ENCODE measurements at regions of chr19 and their contacts with region 1.

Region 1: GRCh38 chr19:50368649-50369570 is 3.5 kb upstream of the NAPSA start:
- DNase-seq: peak; percentile 82
- ATAC-seq: peak; percentile 97

Region 2: DNA sequence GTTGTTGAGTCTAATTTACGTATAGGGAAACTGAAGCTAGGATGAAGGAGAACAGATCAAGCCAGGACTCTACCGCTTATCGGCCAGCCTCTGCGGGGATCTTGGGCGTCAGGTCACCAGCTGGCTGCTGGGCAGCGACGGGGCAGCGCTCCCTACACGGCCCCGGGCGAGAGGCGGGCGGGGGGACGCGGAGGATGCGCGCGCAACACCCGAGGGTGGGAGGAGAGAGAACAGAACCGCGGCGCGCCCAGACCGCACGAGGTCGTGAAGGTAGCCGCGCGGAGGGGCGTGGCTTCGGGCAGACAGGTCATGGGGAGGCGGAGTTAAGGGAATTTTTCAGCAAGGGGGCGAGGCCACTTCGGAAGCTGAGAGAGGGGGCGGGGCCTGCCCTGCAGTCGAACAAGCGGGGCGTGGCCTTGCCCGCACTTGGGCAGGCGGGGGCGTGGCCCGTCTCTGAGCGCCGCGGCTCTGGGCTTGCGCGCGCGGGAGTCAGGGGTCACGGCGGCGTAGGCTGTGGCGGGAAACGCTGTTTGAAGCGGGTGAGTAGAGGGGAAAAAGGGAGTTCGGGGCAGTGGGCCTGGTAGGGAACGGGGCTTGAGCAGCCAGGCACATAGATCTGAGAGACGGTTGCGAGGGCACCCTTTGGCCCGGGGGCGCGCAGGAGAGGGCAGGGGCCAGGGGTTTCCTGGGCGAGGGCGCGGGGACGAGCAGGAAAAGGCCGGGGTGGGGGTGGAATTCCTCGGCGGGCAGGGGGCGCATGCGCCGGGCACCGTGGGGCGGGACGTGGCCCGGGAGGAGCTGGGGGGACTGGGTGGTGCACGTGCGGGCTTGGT is 15.2 kb after region 1 on chr19 and contains the start of gene POLD1:
- intact Hi-C with region 1: no loop called
- DNase-seq: peak; percentile 98
- ATAC-seq: peak; percentile 95 to 97
- total RNA-seq, gene POLD1: 12.0 to 13.4 TPM

Region 3: GRCh38 chr19:50414864-50415660 is 46.2 kb after region 1 on chr19:
- intact Hi-C with region 1: loop called (anchors 2 to 5 kb)
- DNase-seq: peak; percentile 82
- ATAC-seq: peak; percentile 80

Region 4: DNA sequence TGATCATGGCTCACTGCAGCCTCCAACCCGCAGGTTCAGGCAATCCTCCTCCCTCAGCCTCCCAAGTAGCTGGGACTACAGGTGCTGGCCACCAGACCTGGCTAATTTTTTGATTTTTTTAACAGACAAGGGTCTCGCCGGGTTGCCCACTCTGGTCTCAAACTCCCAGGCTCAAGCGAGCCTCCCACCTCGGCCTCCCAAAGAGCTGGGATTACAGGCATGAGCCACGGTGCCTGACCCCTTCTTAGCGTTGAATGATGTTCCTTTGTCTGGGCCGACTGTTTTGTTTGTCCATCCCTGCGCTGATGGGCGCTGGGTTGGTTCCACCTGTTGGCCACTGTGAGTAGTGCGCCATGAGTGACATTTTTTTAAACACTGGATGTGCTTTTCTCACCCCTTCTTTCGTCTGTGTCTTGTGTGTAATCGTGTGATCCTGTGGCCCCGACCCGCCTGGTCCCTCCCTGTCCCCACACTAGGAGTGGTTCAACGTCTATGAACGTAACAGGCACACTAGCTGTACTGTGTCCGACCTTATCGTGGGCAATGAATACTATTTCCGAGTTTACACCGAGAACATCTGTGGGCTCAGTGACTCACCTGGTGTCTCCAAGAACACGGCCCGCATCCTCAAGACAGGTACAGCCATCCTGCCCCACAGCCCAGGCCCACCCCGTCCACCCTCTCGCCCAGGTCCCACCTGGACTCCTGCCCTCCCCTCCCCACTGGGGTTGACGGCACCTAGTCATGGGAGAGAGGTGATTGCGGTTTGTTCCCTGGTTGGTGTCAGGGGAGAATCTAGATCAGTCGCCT is 92.4 kb after region 1 on chr19:
- intact Hi-C with region 1: loop called (anchors 2 to 5 kb)
- DNase-seq: peak; percentile 57
- ATAC-seq: peak; percentile 78 to 79

Region 5: DNA sequence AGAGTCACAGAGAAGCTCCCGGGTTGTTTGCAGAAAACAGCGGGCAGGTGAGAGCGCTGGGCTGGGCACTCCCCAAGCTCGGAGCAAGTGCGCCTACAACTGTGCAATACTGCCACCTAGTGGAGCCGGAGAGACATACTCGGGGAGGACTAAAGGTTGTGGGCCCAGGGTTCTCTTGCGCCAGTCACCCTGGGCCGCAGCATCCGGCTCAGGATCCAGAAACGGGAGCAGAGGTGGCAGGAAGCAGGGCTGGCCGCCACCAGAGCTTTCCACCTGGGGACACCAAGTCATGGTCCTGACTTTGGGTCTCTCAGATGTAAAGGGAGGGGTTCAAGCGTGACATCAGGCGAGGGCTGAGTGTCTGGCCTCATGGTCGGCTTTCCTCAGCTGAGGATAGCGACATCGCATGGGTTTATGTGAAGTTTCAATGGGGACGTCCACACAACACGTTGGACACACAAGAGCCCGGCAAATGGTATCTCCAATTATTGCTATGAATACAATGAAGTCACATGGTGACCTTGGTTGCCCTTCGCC is 553.5 kb after region 1 on chr19:
- intact Hi-C with region 1: loop called in 1 of 2 experiments (anchors 10 kb)
- DNase-seq: peak; percentile 71
- ATAC-seq: peak; percentile 79 to 96